Common myeloid progenitor, CD34-positive (primary cell): ENCODE measurements at regions of chr6 and their contacts with region 1.

Region 1: GRCh38 chr6:136526196-136526930 is 23.9 kb downstream of the MAP7 start:
- DNase-seq: peak; percentile 83 to 93 (median 90)
- H3K4me3 ChIP-seq: peak overlapping the region; percentile 23 to 80 (median 63)
- H3K27ac ChIP-seq: peak overlapping the region; percentile 67 to 82
- H3K4me1 ChIP-seq: peaks cover 12 to 65% (median 46%) of the 10 kb centered on the region in 4 experiments
- H3K27me3 ChIP-seq: no peaks in the 10 kb centered on the region

Region 2: DNA sequence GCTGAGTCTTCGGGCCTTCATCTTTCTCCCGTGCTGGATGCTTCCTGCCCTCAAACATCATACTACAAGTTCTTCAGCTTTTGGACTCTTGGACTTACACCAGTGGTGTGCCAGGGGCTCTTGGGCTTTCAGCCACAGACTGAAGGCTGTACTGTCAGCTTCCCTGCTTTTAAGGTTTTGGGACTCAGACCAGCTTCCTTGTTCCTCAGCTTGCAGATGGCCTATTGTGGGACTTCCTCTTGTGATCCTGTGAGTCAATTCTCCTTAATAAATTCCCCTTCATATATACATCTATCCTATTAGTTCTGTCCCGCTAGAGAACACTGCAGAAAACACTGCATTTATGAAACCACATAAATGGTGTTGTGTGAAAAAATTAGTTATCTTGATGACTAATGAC is 222.8 kb before region 1 on chr6:
- CTCF ChIA-PET with region 1: no interaction called
- POLR2A ChIA-PET with region 1: no interaction called
- DNase-seq: no peak
- H3K4me3 ChIP-seq: no peak overlapping the region
- H3K27ac ChIP-seq: no peak overlapping the region
- H3K4me1 ChIP-seq: no peaks in the 10 kb centered on the region
- H3K27me3 ChIP-seq: no peaks in the 10 kb centered on the region

Region 3: GRCh38 chr6:136510782-136511181 is 15.6 kb before region 1 on chr6:
- CTCF ChIA-PET with region 1: interaction called, 14 read pairs
- POLR2A ChIA-PET with region 1: interaction called, 4 read pairs
- DNase-seq: peak in 2 of 3 donors; percentile 35 to 49
- H3K4me3 ChIP-seq: no peak overlapping the region
- H3K27ac ChIP-seq: no peak overlapping the region
- H3K4me1 ChIP-seq: peaks cover 8 to 68% (median 51%) of the 10 kb centered on the region in 4 experiments
- H3K27me3 ChIP-seq: no peaks in the 10 kb centered on the region

Region 4: DNA sequence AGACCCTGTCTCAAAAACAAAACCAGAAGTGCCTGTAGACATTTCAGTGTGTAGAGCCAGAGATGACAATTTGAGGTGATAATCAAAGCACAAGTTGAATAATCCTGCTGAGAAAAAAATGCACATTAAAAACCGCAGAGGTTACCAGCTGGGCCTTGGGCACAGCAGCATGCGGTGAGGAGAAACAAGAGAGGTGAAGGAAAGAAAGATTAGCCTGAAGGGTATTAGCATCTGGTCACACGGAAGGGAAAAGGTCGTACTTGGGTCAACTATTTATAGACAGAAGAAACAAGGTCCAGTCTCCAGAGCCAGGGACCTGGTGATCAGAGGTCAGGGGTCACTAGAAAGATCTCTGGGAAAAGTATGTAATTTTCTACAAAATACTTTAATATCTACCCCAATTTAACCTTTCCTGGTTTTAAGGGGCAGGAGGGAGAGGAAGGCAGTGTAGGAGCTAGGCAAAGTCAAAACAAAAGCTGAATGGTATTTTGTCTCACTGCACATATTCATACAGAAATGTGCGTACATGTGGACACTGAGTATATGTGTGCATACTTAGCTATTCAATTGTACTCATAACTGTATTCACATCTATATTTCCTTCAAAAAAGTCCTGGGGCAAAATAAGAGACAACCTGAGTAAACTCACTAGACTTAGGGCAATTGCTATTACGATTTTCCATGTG is 13.7 kb after region 1 on chr6:
- CTCF ChIA-PET with region 1: interaction called, 33 read pairs
- POLR2A ChIA-PET with region 1: interaction called, 6 read pairs
- DNase-seq: no peak
- H3K4me3 ChIP-seq: no peak overlapping the region
- H3K27ac ChIP-seq: no peak overlapping the region
- H3K4me1 ChIP-seq: peaks cover 7 to 16% (median 14%) of the 10 kb centered on the region in 4 experiments
- H3K27me3 ChIP-seq: no peaks in the 10 kb centered on the region